ENCODE measurements at regions of chr12 and their contacts with region 1.

Region 1: DNA sequence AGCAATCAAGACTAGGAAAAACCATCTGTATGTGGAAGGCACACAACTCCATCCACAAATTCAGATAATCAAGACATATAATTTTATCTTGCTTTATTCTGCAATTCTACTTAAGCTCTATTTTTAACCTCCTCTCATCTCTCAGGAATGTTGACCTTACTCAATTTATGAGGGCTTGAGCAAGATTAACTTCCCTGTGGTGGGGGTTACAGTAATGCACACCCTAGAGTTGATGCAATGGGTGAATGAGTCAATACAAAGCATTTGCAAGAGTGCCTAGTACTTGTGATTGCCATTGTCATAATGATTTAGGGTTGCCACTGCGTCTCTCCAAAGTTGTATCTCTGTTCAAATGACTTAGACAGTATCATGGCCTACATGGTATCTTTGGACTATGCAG is 1598.4 kb upstream of the TMEM132C start:
- DNase-seq: peak; percentile 97
- H3K4me3 Mint-ChIP-seq: no peak overlapping the region
- H3K27ac Mint-ChIP-seq: no peak overlapping the region
- H3K4me1 Mint-ChIP-seq: peaks cover 27% of the 10 kb centered on the region
- H3K27me3 Mint-ChIP-seq: no peaks in the 10 kb centered on the region
- CTCF ChIP-seq: no peak

Region 2: GRCh38 chr12:126447346-126447745 is 221.2 kb before region 1 on chr12:
- CTCF ChIA-PET with region 1: no interaction called
- POLR2A ChIA-PET with region 1: no interaction called
- intact Hi-C with region 1: no loop called
- DNase-seq: no peak
- H3K4me3 Mint-ChIP-seq: no peak overlapping the region
- H3K27ac Mint-ChIP-seq: no peak overlapping the region
- H3K4me1 Mint-ChIP-seq: no peaks in the 10 kb centered on the region
- H3K27me3 Mint-ChIP-seq: no peaks in the 10 kb centered on the region
- CTCF ChIP-seq: no peak

Region 3: GRCh38 chr12:126681676-126682075 is 13.1 kb after region 1 on chr12:
- CTCF ChIA-PET with region 1: no interaction called
- POLR2A ChIA-PET with region 1: interaction called, 3 read pairs
- intact Hi-C with region 1: loop called (anchors 1 kb)
- DNase-seq: peak; percentile 61
- H3K4me3 Mint-ChIP-seq: no peak overlapping the region
- H3K27ac Mint-ChIP-seq: no peak overlapping the region
- H3K4me1 Mint-ChIP-seq: no peaks in the 10 kb centered on the region
- H3K27me3 Mint-ChIP-seq: no peaks in the 10 kb centered on the region
- CTCF ChIP-seq: no peak

Region 4: GRCh38 chr12:126708492-126708896 is 40.0 kb after region 1 on chr12:
- CTCF ChIA-PET with region 1: interaction called, 5 read pairs
- POLR2A ChIA-PET with region 1: interaction called, 3 read pairs
- intact Hi-C with region 1: loop called (anchors 2 kb)
- DNase-seq: peak; percentile 78
- H3K4me3 Mint-ChIP-seq: no peak overlapping the region
- H3K27ac Mint-ChIP-seq: peak overlapping the region; percentile 46
- H3K4me1 Mint-ChIP-seq: peaks cover 16% of the 10 kb centered on the region
- H3K27me3 Mint-ChIP-seq: no peaks in the 10 kb centered on the region
- CTCF ChIP-seq: no peak

Region 5: GRCh38 chr12:126907900-126908764 is 239.6 kb after region 1 on chr12:
- CTCF ChIA-PET with region 1: no interaction called
- POLR2A ChIA-PET with region 1: no interaction called
- intact Hi-C with region 1: no loop called
- DNase-seq: no peak
- H3K4me3 Mint-ChIP-seq: no peak overlapping the region
- H3K27ac Mint-ChIP-seq: no peak overlapping the region
- H3K4me1 Mint-ChIP-seq: no peaks in the 10 kb centered on the region
- H3K27me3 Mint-ChIP-seq: no peaks in the 10 kb centered on the region
- CTCF ChIP-seq: no peak